Tibial artery (tissue), 4 donors: ENCODE measurements at regions of chr1 and their contacts with region 1.

Region 1: DNA sequence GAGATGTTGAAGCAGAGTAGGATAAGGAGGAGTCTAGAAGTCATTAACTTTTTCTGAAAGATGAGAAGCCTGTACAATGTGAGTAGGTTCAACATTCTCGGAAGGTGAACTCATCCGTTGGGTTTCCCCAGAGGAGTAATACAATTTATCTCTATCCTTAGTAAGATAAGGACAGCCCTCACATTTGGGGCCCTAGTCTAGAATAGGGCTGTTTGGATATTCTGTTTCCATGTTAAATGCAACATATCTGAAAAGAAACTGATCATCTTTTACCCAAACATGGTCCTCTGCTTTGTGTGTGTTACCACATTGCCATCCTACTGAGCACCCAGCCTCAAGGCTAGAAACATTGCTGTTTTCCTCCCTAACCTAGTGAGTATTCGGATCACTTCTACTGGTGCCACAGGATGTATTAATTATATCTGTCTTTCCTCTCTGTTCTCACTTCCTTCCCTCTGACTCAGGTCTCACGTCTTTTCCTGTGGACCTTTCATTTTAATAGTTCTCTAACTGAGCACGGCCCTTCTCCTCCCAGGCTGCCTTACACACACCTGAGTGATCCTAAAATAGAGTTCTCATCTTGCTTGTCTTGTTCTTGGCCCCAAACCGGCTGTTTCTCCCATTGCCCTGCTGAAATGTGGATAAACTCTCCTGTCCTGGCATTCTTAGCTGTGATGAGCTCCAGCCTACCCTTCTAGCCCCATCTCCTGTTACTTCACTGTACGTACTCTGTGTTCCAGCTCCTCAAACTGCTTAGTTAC is 91.7 kb downstream of the CDC14A start:
- DNase-seq: no peak
- H3K4me3 ChIP-seq: no peak overlapping the region
- H3K27ac ChIP-seq: no peak overlapping the region
- H3K4me1 ChIP-seq: no peaks in the 10 kb centered on the region
- H3K27me3 ChIP-seq: no peaks in the 10 kb centered on the region
- CTCF ChIP-seq: no peak

Region 2: GRCh38 chr1:100523038-100523652 is 79.2 kb after region 1 on chr1:
- intact Hi-C with region 1: no loop called
- DNase-seq: no peak
- H3K4me3 ChIP-seq: no peak overlapping the region
- H3K27ac ChIP-seq: no peak overlapping the region
- H3K4me1 ChIP-seq: peaks cover 0 to 20% (median 7%) of the 10 kb centered on the region in 4 donors
- H3K27me3 ChIP-seq: no peaks in the 10 kb centered on the region
- CTCF ChIP-seq: no peak

Region 3: GRCh38 chr1:100736746-100737145 is 292.8 kb after region 1 on chr1:
- intact Hi-C with region 1: no loop called
- DNase-seq: no peak
- H3K4me3 ChIP-seq: no peak overlapping the region
- H3K27ac ChIP-seq: no peak overlapping the region
- H3K4me1 ChIP-seq: peaks cover 0 to 23% (median 3%) of the 10 kb centered on the region in 4 donors
- H3K27me3 ChIP-seq: no peaks in the 10 kb centered on the region
- CTCF ChIP-seq: no peak

Region 4: DNA sequence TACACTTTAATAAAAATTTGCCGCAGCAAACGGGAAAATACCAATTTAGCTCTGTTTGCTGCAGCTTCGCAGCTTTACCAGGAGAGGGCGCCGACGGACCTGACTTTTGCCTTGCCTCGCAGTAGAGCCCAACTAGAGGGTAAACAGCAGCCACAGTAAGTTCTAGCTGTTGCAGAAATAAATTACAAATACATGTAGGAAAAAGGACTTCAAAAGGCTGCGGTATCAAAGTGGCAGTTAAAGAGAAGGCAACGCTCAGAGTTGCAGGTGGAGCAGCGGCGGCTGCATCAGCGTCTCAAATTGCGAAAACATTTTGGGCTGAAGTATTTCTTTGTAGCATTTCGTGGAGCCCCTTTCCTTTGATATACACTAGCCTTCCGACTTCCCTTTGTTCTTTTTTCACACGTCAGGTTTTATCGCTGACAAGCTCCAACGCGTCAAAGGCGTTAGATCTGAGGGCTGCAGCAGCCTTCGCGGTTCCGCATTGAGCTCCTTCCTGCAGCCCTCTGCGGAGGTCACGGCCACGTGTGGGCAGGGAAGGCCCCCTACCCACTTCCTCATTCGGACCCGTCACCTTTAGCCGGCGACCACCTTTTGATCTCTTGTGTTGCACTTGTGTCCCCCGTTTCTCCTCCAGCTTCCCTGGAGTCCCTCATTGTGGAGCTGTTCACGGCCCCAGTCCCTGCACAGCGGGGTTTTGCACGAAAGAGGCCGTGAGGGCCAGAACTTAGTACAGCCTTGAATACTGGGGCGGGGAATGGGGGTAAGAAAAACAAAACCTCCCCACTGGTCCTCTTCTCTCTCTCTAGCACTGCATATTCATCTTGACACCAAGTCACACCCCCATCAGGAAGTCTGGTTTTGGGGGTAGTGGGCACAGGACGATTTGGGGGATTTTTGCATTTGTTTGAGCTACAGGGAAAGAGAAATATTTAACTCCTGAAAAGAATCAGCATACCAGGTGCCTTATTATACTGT is 865.6 kb after region 1 on chr1:
- intact Hi-C with region 1: loop called (anchors 10 kb)
- DNase-seq: peak in 1 of 2 donors; percentile 26
- H3K4me3 ChIP-seq: peak overlapping the region; percentile 23 to 32
- H3K27ac ChIP-seq: no peak overlapping the region
- H3K4me1 ChIP-seq: peaks cover 0 to 10% (median 7%) of the 10 kb centered on the region in 4 donors
- H3K27me3 ChIP-seq: peaks cover 0 to 19% of the 10 kb centered on the region in 2 donors
- CTCF ChIP-seq: peak; percentile 59 to 77